ENCODE measurements at regions of chr19 and their contacts with region 1.

Region 1: DNA sequence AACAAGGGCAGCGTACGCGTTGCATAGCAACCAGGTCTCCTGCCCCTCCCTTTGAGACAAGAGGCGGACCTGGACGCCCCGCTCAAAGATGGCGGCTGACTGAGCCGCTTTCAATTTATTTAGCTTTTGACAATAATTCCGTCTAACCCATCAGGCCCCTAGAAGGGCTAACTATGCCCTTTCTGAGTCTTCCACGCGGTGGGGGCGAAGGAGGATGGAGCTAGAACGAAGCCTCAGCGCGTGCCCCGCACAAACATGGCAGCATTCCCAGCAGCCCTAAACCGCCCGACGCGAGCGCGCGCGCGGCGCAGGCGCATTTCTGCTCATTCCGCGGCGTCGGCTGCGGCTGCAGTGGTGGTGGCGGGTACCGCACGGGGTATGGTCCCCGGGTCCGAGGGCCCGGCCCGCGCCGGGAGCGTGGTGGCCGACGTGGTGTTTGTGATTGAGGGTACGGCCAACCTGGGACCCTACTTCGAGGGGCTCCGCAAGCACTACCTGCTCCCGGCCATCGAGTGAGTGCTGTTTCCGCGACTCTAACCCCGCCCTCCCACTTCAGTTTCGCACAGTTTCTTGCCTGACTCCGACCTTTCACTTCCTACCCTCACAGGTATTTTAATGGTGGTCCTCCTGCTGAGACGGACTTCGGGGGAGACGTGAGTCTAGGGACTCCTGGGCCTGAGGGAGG is at the start of gene MED25:
- DNase-seq: peak; percentile 81 to 98 (median 89)
- ATAC-seq: peak; percentile 55
- H3K4me3 Mint-ChIP-seq: peak within 1 kb of the TSS; percentile 94 to 100 (median 99)
- H3K27ac Mint-ChIP-seq: peak within 1 kb of the TSS; percentile 98 to 100 (median 100)
- H3K4me1 Mint-ChIP-seq: peaks cover 11 to 40% (median 32%) of the 10 kb centered on the region in 4 donors
- H3K27me3 Mint-ChIP-seq: peaks cover 0 to 2% (median 0%) of the 10 kb centered on the region in 5 donors
- polyA plus RNA-seq, gene MED25: 7.5 to 19.2 (median 13.1) TPM

Region 2: DNA sequence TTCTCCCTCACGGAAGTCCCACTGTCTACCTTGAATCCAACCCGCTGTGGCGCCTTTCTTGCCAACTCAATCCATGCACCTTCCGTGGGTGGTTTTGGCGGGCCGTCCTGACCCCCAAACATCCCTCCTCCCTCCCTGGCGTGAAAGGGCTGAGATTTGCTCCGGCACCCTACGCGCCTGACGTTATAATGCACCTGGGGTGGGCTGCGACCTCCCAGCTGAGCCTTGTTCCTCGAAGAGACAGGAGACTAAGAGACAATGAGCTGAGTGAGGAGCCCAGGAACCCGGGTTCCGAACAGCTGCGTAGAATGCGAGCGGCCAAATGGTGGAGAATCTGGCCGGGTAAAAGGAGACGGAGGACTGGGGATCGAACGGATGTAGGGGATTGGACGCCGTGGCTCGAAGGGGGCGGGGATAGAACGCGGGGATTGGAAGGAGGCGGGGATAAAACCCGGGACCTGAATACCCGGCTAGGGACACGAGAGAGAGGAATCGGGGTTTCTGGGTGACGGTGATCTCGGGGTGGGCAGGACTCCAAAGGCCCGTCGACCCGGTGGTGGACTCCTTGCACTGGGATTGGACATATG is 127.4 kb before region 1 on chr19 and contains the start of gene CPT1C:
- POLR2A ChIA-PET with region 1: no interaction called
- DNase-seq: peak in 6 of 10 donors; percentile 35 to 62 (median 50)
- ATAC-seq: peak; percentile 73 to 75
- H3K4me3 Mint-ChIP-seq: peak within 1 kb of the TSS; percentile 85 to 99 (median 92)
- H3K27ac Mint-ChIP-seq: peak within 1 kb of the TSS; percentile 1 to 93 (median 74)
- H3K4me1 Mint-ChIP-seq: peaks cover 16 to 33% (median 23%) of the 10 kb centered on the region in 4 donors
- H3K27me3 Mint-ChIP-seq: peaks cover 0 to 22% (median 11%) of the 10 kb centered on the region in 5 donors
- polyA plus RNA-seq, gene CPT1C: 0.19 to 0.54 (median 0.40) TPM

Region 3: GRCh38 chr19:49718511-49718910 is 99.6 kb before region 1 on chr19:
- POLR2A ChIA-PET with region 1: interaction called, 24 read pairs
- DNase-seq: no peak
- ATAC-seq: no peak
- H3K4me3 Mint-ChIP-seq: peak overlapping the region; percentile 52 to 97 (median 80)
- H3K27ac Mint-ChIP-seq: peak overlapping the region; percentile 60 to 100 (median 98)
- H3K4me1 Mint-ChIP-seq: peaks cover 6 to 32% (median 10%) of the 10 kb centered on the region in 4 donors
- H3K27me3 Mint-ChIP-seq: no peaks in the 10 kb centered on the region

Region 4: GRCh38 chr19:49869441-49870176 is 51.5 kb after region 1 on chr19:
- POLR2A ChIA-PET with region 1: interaction called, 23 read pairs
- DNase-seq: peak; percentile 77 to 97 (median 89)
- ATAC-seq: peak; percentile 77
- H3K4me3 Mint-ChIP-seq: peak overlapping the region in 1 of 10 donors; percentile 85
- H3K27ac Mint-ChIP-seq: peak overlapping the region in 2 of 10 donors; percentile 89 to 92
- H3K4me1 Mint-ChIP-seq: peaks cover 14 to 53% (median 50%) of the 10 kb centered on the region in 4 donors
- H3K27me3 Mint-ChIP-seq: no peaks in the 10 kb centered on the region